Motor neuron (in vitro differentiated cells): ENCODE measurements at regions of chr3 and their contacts with region 1.

Region 1: DNA sequence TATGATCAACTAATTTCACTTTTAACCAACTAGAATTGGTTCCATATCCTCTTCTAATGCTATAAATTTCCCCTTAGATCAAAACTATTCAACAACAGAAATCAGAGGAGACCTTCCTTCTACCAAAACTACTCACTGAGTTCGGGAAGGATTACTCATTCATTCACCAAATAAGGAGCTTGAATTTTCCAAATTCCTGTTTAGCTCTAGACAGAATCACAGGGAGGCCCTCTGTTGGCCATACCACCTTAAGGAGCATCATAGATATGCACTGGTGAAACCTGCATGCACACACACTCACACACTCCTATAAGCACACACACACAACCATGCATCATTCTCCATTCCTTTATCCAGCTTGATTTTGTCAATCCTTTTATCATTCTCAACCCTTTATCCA is 49.0 kb downstream of the SUCLG2 start:
- ATAC-seq: peak in 3 of 8 experiments; percentile 55 to 77 (median 59)
- H3K4me3 ChIP-seq: no peak overlapping the region
- H3K27ac ChIP-seq: no peak overlapping the region
- H3K4me1 ChIP-seq: no peaks in the 10 kb centered on the region

Region 2: DNA sequence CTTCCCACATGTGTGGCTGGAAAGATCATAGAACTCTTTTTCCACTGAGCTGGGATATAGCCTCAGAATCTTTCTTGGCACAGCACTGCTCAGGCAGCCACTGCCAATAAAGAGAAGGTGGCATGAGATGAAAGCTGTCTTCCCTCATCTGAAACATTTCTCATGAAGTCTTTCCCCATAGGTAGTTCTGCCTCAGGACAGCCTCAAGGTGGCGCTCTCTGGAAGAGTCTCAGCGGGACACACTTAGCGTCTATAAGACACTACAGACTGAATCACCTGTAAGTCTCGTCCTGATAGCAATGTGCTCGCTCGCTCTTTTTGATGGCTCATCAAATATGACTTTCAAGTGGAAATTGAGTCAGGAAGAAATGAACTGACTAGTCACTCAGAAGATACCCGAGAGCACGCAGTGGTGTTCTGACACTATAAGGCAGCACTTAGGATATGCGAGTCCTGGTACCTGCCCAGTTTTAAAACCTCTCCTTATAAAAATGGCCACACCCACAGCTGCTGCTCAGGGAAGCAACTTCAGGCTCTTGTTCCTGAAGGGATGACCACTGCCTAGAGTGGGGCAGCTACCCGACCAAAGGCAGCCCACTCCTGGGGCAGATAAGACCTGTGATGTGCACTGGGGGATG is 220.5 kb before region 1 on chr3:
- in situ Hi-C with region 1: loop called in 1 of 9 experiments (anchors 25 kb)
- ATAC-seq: peak; percentile 53 to 86 (median 65)
- H3K4me3 ChIP-seq: no peak overlapping the region
- H3K27ac ChIP-seq: no peak overlapping the region
- H3K4me1 ChIP-seq: no peaks in the 10 kb centered on the region

Region 3: GRCh38 chr3:67876261-67876660 is 270.9 kb after region 1 on chr3:
- in situ Hi-C with region 1: no loop called
- ATAC-seq: no peak
- H3K4me3 ChIP-seq: no peak overlapping the region
- H3K27ac ChIP-seq: no peak overlapping the region
- H3K4me1 ChIP-seq: no peaks in the 10 kb centered on the region